Naive thymus-derived CD4-positive, alpha-beta T cell (primary cell): ENCODE measurements at regions of chr20 and their contacts with region 1.

Region 1: GRCh38 chr20:44521484-44522481 is at the start of gene SERINC3:
- DNase-seq: peak; percentile 96 to 99 (median 98)
- ATAC-seq: peak; percentile 99
- H3K4me3 ChIP-seq: peak within 1 kb of the TSS; percentile 95
- H3K4me3 Mint-ChIP-seq: peak within 1 kb of the TSS; percentile 82 to 93 (median 88)
- H3K27ac ChIP-seq: peak within 1 kb of the TSS; percentile 99
- H3K27ac Mint-ChIP-seq: peak within 1 kb of the TSS; percentile 87 to 99 (median 96)
- H3K4me1 ChIP-seq: peaks cover 30 to 34% of the 10 kb centered on the region in 2 donors
- H3K4me1 Mint-ChIP-seq: peaks cover 31 to 68% (median 58%) of the 10 kb centered on the region in 7 donors
- H3K27me3 ChIP-seq: no peaks in the 10 kb centered on the region
- H3K27me3 Mint-ChIP-seq: no peaks in the 10 kb centered on the region
- total RNA-seq, gene SERINC3: 59.7 to 85.3 (median 78.9) TPM

Region 2: GRCh38 chr20:43721429-43722152 is 800.2 kb before region 1 on chr20:
- CTCF ChIA-PET with region 1: no interaction called
- POLR2A ChIA-PET with region 1: no interaction called
- intact Hi-C with region 1: loop called in 1 of 2 experiments (anchors 5 kb)
- DNase-seq: no peak
- ATAC-seq: no peak
- H3K4me3 ChIP-seq: peak overlapping the region; percentile 62
- H3K4me3 Mint-ChIP-seq: peak overlapping the region; percentile 62 to 92 (median 79)
- H3K27ac ChIP-seq: peak overlapping the region; percentile 75
- H3K27ac Mint-ChIP-seq: peak overlapping the region; percentile 65 to 95 (median 88)
- H3K4me1 ChIP-seq: peaks cover 0 to 53% of the 10 kb centered on the region in 2 donors
- H3K4me1 Mint-ChIP-seq: peaks cover 13 to 95% (median 70%) of the 10 kb centered on the region in 7 donors
- H3K27me3 ChIP-seq: no peaks in the 10 kb centered on the region
- H3K27me3 Mint-ChIP-seq: no peaks in the 10 kb centered on the region

Region 3: DNA sequence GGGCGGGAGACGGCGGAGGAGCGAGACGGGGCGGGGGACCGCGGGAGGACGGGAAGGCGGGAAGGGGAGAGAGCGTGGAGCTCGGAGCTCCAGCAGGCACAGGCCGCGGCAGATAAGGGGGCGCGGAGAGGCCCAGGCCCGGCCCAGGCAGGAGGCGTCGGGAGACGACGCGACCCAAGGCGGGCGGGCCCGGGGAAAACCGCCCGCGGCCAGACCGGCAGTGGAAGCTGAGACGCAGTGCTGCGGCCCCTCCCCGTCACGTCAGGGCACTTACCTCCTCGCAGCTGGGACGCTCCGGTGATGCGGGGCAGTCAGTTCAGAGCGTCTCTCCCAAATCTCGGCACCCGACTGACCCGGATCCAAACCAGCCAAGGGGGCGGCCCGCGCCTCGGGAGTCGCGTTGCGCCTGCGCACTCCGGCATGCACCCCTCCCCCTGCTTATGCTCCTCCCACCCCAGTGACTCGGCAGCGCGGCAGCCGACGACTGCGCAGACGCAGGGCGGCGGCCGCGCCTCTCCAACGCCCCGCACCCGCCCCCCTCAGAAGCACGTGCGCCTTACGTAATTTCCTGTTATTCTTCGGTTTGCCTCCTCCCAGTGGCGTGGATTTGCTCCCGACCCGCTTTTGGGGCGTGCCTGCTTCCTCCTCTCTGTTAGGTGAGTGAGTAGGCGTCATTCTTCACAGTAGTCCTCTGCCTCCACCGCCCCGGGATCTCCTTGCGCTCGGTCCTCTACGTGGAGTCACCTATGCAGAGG is 311.2 kb before region 1 on chr20 and contains the start of gene OSER1:
- CTCF ChIA-PET with region 1: no interaction called
- POLR2A ChIA-PET with region 1: interaction called, 3 read pairs
- intact Hi-C with region 1: loop called (anchors 1 to 2 kb)
- DNase-seq: peak; percentile 98 to 99 (median 99)
- ATAC-seq: peak; percentile 91
- H3K4me3 ChIP-seq: peak within 1 kb of the TSS; percentile 96
- H3K4me3 Mint-ChIP-seq: peak within 1 kb of the TSS; percentile 90 to 100 (median 95)
- H3K27ac ChIP-seq: peak within 1 kb of the TSS; percentile 97
- H3K27ac Mint-ChIP-seq: peak within 1 kb of the TSS; percentile 97 to 99 (median 98)
- H3K4me1 ChIP-seq: peaks cover 23 to 29% of the 10 kb centered on the region in 2 donors
- H3K4me1 Mint-ChIP-seq: peaks cover 45 to 78% (median 72%) of the 10 kb centered on the region in 7 donors
- H3K27me3 ChIP-seq: no peaks in the 10 kb centered on the region
- H3K27me3 Mint-ChIP-seq: peaks cover 0 to 4% (median 0%) of the 10 kb centered on the region in 5 donors
- total RNA-seq, gene OSER1: 25.0 to 115 (median 43.0) TPM

Region 4: DNA sequence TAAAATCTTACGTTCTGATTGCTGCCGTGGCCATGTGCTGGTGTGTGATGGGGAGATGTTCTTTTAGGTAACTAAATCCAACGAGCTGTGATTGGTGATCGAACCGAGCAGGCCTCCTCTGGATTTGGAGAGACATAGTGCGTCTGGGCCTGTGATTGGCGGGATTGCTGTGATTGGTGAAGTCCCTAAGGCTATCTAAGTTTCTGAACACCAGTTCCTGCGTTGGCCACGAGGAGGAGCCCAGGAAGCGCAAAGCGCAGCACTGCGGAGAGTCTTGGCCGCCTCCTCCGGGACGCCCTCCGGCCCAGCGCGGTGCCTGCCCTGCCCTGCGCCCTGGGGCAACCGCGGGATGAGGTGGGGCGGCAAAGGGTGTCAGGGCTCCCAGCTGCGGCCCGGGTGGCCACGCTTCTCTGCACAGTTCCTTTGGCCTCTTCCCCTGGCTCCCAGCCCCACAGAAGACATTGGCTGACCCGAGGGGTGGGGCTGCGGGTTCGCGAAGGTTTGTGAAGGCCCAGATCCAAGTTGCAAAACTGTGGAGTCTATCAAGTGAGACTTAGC is 133.2 kb before region 1 on chr20:
- CTCF ChIA-PET with region 1: no interaction called
- POLR2A ChIA-PET with region 1: interaction called, 3 read pairs
- intact Hi-C with region 1: loop called in 1 of 2 experiments (anchors 10 kb)
- DNase-seq: peak; percentile 30 to 70 (median 50)
- ATAC-seq: peak; percentile 91
- H3K4me3 ChIP-seq: no peak overlapping the region
- H3K4me3 Mint-ChIP-seq: peak overlapping the region in 4 of 10 donors; percentile 14 to 69 (median 38)
- H3K27ac ChIP-seq: no peak overlapping the region
- H3K27ac Mint-ChIP-seq: peak overlapping the region in 1 of 9 donors; percentile 41
- H3K4me1 ChIP-seq: no peaks in the 10 kb centered on the region
- H3K4me1 Mint-ChIP-seq: peaks cover 4 to 16% (median 8%) of the 10 kb centered on the region in 7 donors
- H3K27me3 ChIP-seq: no peaks in the 10 kb centered on the region
- H3K27me3 Mint-ChIP-seq: peaks cover 9 to 20% (median 10%) of the 10 kb centered on the region in 5 donors

Region 5: DNA sequence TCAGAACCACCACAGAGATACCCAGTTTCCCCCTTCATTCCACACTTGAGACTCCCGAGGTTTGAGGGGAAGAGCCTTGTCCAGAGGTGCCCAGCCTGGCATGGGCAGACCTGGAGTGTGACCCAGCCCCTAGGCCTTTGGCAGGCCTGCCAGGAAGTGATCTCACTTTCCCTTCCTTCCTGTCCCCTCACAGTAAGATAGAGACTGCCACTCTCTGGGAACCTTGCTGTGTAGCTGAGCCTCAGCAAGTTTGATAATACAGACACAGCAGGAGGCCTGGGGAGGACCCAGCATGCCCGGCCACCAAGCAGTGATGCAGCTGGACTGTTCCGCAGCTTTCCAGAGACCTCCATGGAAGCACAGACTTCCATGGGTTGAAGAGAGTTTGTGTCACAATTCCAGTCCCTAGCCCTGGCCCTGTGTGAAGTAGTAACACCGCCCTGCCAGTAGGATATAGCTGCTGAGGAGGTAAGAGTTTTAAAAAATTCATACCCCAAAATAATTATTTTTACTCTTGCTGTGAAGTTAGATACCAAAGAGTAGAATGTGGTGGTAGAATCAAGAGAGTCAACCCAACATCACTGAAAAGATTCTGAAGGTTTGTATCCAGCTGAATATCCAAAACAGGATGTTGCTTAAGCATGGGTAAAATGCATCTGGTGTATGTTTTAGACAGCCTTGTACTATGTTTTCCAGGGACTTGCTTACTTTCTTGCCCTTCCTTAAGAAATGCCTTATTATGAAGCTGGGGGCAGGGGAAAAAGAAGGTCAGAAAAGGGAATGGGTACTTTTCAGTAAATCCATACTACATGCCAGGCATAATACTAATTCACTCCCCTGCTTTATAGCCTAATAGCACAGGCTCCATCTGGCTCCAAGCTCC is 76.9 kb after region 1 on chr20:
- CTCF ChIA-PET with region 1: no interaction called
- POLR2A ChIA-PET with region 1: interaction called, 3 read pairs
- intact Hi-C with region 1: loop called in 1 of 2 experiments (anchors 5 kb)
- DNase-seq: no peak
- ATAC-seq: peak; percentile 70
- H3K4me3 ChIP-seq: no peak overlapping the region
- H3K4me3 Mint-ChIP-seq: peak overlapping the region; percentile 52 to 80 (median 74)
- H3K27ac ChIP-seq: peak overlapping the region; percentile 44
- H3K27ac Mint-ChIP-seq: peak overlapping the region; percentile 82 to 96 (median 88)
- H3K4me1 ChIP-seq: peaks cover 0 to 12% of the 10 kb centered on the region in 2 donors
- H3K4me1 Mint-ChIP-seq: peaks cover 10 to 40% (median 29%) of the 10 kb centered on the region in 7 donors
- H3K27me3 ChIP-seq: no peaks in the 10 kb centered on the region
- H3K27me3 Mint-ChIP-seq: no peaks in the 10 kb centered on the region

Region 6: DNA sequence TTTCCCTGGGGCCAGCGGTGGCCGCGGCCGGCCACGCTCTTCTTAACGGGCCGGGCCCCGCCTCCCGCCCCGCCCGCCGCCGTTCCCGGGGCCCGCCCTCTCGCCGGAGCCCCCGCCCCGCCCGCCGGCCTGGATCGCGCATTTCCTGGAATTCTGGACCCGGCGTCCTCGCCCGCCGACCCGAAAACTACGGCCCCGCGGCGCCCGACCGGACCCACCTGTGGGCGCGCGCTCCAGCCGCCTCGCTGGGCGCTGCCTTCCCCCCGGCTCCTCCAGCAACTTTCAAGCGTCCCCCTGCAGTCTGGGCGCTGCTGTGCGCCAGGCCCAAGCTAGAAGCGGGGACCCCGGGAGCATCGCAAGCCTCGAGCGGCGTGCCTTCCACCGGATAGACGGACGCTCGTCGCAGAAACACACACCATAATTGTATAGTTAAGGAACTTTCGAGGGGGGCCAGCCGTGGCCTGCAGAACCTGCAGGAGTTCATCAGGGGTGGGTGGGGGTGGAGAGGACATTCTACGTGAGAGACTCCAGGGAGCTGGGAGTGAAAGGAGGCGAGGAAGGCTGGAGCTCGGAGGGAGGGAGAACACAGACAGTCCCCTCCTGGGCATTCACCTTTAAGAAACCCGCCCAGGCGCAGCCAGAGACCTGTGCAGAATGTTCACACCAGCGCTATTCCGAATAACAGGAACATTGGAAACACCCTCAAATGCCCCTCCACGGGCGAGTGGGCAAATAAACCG is 130.1 kb after region 1 on chr20 and contains the start of gene ADA:
- CTCF ChIA-PET with region 1: no interaction called
- POLR2A ChIA-PET with region 1: interaction called, 6 read pairs
- intact Hi-C with region 1: loop called in 1 of 2 experiments (anchors 1 kb)
- DNase-seq: peak; percentile 26 to 70 (median 48)
- ATAC-seq: peak; percentile 70
- H3K4me3 ChIP-seq: peak within 1 kb of the TSS; percentile 73
- H3K4me3 Mint-ChIP-seq: peak within 1 kb of the TSS; percentile 81 to 96 (median 94)
- H3K27ac ChIP-seq: peak within 1 kb of the TSS; percentile 73
- H3K27ac Mint-ChIP-seq: peak within 1 kb of the TSS; percentile 88 to 98 (median 95)
- H3K4me1 ChIP-seq: peaks cover 38 to 43% of the 10 kb centered on the region in 2 donors
- H3K4me1 Mint-ChIP-seq: peaks cover 40 to 57% (median 55%) of the 10 kb centered on the region in 7 donors
- H3K27me3 ChIP-seq: no peaks in the 10 kb centered on the region
- H3K27me3 Mint-ChIP-seq: no peaks in the 10 kb centered on the region
- total RNA-seq, gene ADA: 26.1 to 103 (median 28.2) TPM

Region 7: GRCh38 chr20:44861531-44862006 is 339.8 kb after region 1 on chr20:
- CTCF ChIA-PET with region 1: no interaction called
- POLR2A ChIA-PET with region 1: no interaction called
- intact Hi-C with region 1: no loop called
- DNase-seq: no peak
- ATAC-seq: no peak
- H3K4me3 ChIP-seq: no peak overlapping the region
- H3K4me3 Mint-ChIP-seq: no peak overlapping the region
- H3K27ac ChIP-seq: no peak overlapping the region
- H3K27ac Mint-ChIP-seq: peak overlapping the region in 1 of 9 donors; percentile 43
- H3K4me1 ChIP-seq: no peaks in the 10 kb centered on the region
- H3K4me1 Mint-ChIP-seq: peaks cover 0 to 13% (median 8%) of the 10 kb centered on the region in 7 donors
- H3K27me3 ChIP-seq: no peaks in the 10 kb centered on the region
- H3K27me3 Mint-ChIP-seq: peaks cover 0 to 9% (median 0%) of the 10 kb centered on the region in 5 donors

Region 8: GRCh38 chr20:44966030-44966961 is 444.5 kb after region 1 on chr20 and contains the start of gene STK4:
- CTCF ChIA-PET with region 1: no interaction called
- POLR2A ChIA-PET with region 1: interaction called, 3 read pairs
- intact Hi-C with region 1: loop called in 1 of 2 experiments (anchors 1 kb)
- DNase-seq: peak; percentile 93 to 98 (median 96)
- ATAC-seq: peak; percentile 93
- H3K4me3 ChIP-seq: peak within 1 kb of the TSS; percentile 75
- H3K4me3 Mint-ChIP-seq: peak within 1 kb of the TSS; percentile 93 to 100 (median 95)
- H3K27ac ChIP-seq: peak within 1 kb of the TSS; percentile 91
- H3K27ac Mint-ChIP-seq: peak within 1 kb of the TSS; percentile 80 to 98 (median 90)
- H3K4me1 ChIP-seq: peaks cover 16 to 17% of the 10 kb centered on the region in 2 donors
- H3K4me1 Mint-ChIP-seq: peaks cover 32 to 60% (median 55%) of the 10 kb centered on the region in 7 donors
- H3K27me3 ChIP-seq: no peaks in the 10 kb centered on the region
- H3K27me3 Mint-ChIP-seq: no peaks in the 10 kb centered on the region
- total RNA-seq, gene STK4: 207 to 383 (median 267) TPM